K562 (cell line): ENCODE measurements at regions of chr1 and their contacts with region 1.

Region 1: GRCh38 chr1:19203440-19203839 is 6.6 kb downstream of the UBR4 start:
- DNase-seq: no peak
- ATAC-seq: no peak
- H3K4me3 ChIP-seq: no peak overlapping the region
- H3K27ac ChIP-seq: no peak overlapping the region
- H3K4me1 ChIP-seq: peaks cover 20 to 46% of the 10 kb centered on the region in 2 experiments
- H3K27me3 ChIP-seq: no peaks in the 10 kb centered on the region
- CTCF ChIP-seq: no peak
- EP300 ChIP-seq: no peak
- POLR2A ChIP-seq: no peak
- RAD21 ChIP-seq: no peak

Region 2: GRCh38 chr1:19189270-19189669 is 14.2 kb before region 1 on chr1:
- CTCF ChIA-PET with region 1: no interaction called
- POLR2A ChIA-PET with region 1: interaction called, 19 read pairs
- in situ Hi-C with region 1: no loop called
- intact Hi-C with region 1: no loop called
- DNase-seq: no peak
- ATAC-seq: no peak
- H3K4me3 ChIP-seq: no peak overlapping the region
- H3K27ac ChIP-seq: no peak overlapping the region
- H3K4me1 ChIP-seq: no peaks in the 10 kb centered on the region
- H3K27me3 ChIP-seq: no peaks in the 10 kb centered on the region
- CTCF ChIP-seq: no peak
- EP300 ChIP-seq: no peak
- POLR2A ChIP-seq: no peak
- RAD21 ChIP-seq: no peak

Region 3: GRCh38 chr1:19310720-19311502 is 107.5 kb after region 1 on chr1:
- CTCF ChIA-PET with region 1: no interaction called
- POLR2A ChIA-PET with region 1: no interaction called
- in situ Hi-C with region 1: no loop called
- intact Hi-C with region 1: no loop called
- DNase-seq: peak in 1 of 4 experiments; percentile 38
- ATAC-seq: no peak
- H3K4me3 ChIP-seq: peak overlapping the region; percentile 77
- H3K27ac ChIP-seq: peak overlapping the region; percentile 5; the same call in 1 of the 3 replicates
- H3K4me1 ChIP-seq: peaks cover 38 to 59% of the 10 kb centered on the region in 2 experiments
- H3K27me3 ChIP-seq: no peaks in the 10 kb centered on the region
- CTCF ChIP-seq: no peak
- EP300 ChIP-seq: no peak
- POLR2A ChIP-seq: no peak
- RAD21 ChIP-seq: no peak